OCI-LY7 (cell line): ENCODE measurements at regions of chr12 and their contacts with region 1.

Region 1: GRCh38 chr12:32692358-32692757 is 13.3 kb downstream of the DNM1L start:
- DNase-seq: no peak
- H3K4me3 ChIP-seq: no peak overlapping the region
- H3K27ac ChIP-seq: no peak overlapping the region
- H3K4me1 ChIP-seq: no peaks in the 10 kb centered on the region
- CTCF ChIP-seq: no peak

Region 2: DNA sequence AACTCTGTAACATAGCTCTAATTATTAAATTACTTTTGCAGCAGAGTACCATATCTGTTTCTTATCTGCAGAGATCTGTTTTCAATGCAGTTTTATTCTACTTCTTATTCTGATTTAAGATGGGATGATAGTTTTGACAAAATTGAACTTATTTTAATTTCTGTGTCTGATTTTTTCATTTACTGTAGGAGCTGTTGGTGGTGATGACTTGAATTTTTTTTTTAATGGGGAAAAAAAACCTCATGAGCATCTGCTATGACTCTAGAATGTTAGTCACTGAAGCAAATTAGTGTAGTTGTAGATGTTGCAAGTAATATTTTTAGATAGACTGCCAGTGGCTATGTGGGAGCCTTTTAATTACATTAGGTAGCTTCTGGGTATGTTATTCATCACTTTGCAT is 10.1 kb after region 1 on chr12:
- CTCF ChIA-PET with region 1: interaction called, 3 read pairs
- POLR2A ChIA-PET with region 1: interaction called, 23 read pairs
- intact Hi-C with region 1: no loop called
- DNase-seq: no peak
- H3K4me3 ChIP-seq: no peak overlapping the region
- H3K27ac ChIP-seq: no peak overlapping the region
- H3K4me1 ChIP-seq: peaks cover 10% of the 10 kb centered on the region
- CTCF ChIP-seq: no peak

Region 3: GRCh38 chr12:32983968-32984367 is 291.6 kb after region 1 on chr12:
- CTCF ChIA-PET with region 1: no interaction called
- POLR2A ChIA-PET with region 1: no interaction called
- intact Hi-C with region 1: no loop called
- DNase-seq: no peak
- H3K4me3 ChIP-seq: no peak overlapping the region
- H3K27ac ChIP-seq: no peak overlapping the region
- H3K4me1 ChIP-seq: no peaks in the 10 kb centered on the region
- CTCF ChIP-seq: no peak